AG04449 (cell line): ENCODE measurements at regions of chr2 and their contacts with region 1.

Region 1: DNA sequence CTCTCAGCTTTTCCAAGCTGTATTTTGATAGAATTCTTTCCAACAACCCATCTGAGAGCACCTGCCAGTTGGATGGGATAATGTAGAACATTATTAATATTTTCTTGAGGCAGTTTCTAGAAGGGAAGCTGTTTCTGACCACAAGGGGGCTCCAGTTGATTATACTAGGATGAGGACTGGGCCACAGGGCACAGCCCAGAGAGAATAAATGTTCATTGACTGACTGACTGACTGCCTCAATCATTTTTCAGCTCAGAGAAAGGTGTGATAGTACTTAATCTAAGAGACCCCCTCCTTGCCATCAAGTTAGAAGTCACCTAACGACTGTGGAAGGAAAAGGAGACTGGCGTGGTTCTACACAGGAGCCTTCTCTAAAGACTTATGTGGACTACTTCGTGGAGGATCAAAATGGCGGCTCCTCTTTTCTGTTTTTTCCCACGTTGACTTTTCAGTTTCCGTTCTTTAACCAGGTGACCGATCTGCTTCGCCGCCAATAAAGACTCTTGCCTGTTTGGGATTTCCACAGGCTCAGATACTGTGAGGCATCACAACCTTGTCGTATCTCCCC is 31.9 kb upstream of the CREG2 start:
- DNase-seq: no peak
- H3K4me3 ChIP-seq: no peak overlapping the region
- CTCF ChIP-seq: peak; percentile 52

Region 2: GRCh38 chr2:100893392-100894089 is 525.6 kb before region 1 on chr2:
- CTCF ChIA-PET with region 1: no interaction called
- POLR2A ChIA-PET with region 1: no interaction called
- DNase-seq: no peak
- H3K4me3 ChIP-seq: no peak overlapping the region
- CTCF ChIP-seq: no peak

Region 3: DNA sequence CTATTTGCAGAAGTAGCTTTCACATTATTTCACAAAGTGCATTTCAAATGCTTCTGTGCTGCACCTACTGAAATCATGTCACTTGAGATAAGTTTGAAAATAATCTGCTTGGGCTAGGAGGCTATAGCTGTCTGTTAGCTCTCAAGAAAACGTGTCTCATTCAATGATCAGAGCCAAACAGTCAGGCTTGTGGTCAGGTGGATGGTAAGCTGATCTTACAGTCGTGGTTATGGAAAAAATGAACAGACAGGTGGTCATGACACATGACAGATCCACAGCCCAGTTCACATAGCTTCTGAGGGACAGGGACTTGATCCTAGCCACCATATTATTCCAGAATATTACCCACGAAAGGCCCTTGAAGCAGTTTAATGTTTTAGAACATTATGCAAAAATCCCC is 82.3 kb after region 1 on chr2:
- CTCF ChIA-PET with region 1: interaction called, 13 read pairs
- POLR2A ChIA-PET with region 1: no interaction called
- DNase-seq: no peak
- H3K4me3 ChIP-seq: no peak overlapping the region
- CTCF ChIP-seq: no peak

Region 4: GRCh38 chr2:101710471-101711318 is 291.5 kb after region 1 on chr2:
- CTCF ChIA-PET with region 1: interaction called, 10 read pairs
- POLR2A ChIA-PET with region 1: no interaction called
- DNase-seq: no peak
- H3K4me3 ChIP-seq: no peak overlapping the region
- CTCF ChIP-seq: no peak

Region 5: GRCh38 chr2:101841679-101842327 is 422.6 kb after region 1 on chr2:
- CTCF ChIA-PET with region 1: interaction called, 123 read pairs
- POLR2A ChIA-PET with region 1: no interaction called
- DNase-seq: no peak
- H3K4me3 ChIP-seq: no peak overlapping the region
- CTCF ChIP-seq: no peak

Region 6: DNA sequence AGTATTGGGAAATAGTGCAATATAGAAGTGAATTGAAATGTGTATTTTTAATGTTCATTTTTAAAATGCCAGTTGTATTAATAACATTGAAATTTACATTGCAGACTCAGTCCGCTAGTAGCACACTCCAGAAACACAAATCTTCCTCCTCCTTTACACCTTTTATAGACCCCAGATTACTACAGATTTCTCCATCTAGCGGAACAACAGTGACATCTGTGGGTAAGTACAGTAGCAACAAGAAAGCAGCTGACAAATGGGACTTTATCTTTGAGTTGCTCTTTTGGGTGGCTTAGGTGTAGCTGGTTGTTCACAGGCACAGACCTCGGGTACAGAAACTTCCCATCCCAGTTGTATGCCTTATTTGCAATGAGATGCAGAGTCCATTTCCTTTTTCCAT is 454.4 kb after region 1 on chr2:
- CTCF ChIA-PET with region 1: interaction called, 11 read pairs
- POLR2A ChIA-PET with region 1: no interaction called
- DNase-seq: no peak
- H3K4me3 ChIP-seq: no peak overlapping the region
- CTCF ChIP-seq: no peak